Activated T-helper 2 cell treated with anti-CD3 and anti-CD28 coated beads, Interferon-gamma antibody, Interleukin-2, Interleukin-4, amounts not matched to agents 10 μg/mL and 5 μg/mL and 100 μg/mL, durations not matched to agents 14 hours and 24 hours and 36 hours (primary cell): ENCODE measurements at regions of chr11 and their contacts with region 1.

Region 1: DNA sequence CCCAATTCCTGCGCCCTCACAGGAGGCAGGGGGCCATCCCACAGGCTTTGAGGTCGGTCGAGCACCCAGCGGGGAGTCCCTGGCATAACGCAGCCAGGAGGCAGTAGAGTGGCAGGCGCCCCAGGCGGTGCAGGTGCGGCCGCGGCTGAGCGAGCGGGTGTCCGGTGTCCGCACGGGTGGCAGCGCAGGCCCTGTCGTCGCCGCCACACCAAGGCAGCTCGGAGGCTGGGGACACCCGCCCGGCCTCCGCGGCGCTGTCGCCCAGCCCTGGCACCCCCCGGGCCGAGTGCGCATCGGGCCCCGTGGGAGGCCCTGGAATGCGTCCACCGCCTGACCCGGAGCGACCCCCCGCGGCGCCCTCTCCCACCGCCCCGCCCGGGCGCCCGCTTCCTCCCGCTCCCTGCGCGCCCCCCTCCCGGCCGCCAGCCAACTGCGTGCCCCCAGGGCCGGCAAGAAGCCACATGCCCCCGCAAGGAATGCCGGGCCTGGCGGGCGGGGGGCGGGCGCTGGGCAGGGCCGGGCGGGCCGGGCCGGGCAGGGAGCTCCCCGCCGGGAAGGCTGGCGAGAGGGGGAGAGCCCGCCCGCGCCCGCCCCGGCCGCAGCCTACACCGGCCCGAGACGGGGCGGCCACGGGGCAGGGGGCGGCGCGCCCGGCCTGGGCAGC is 33.9 kb downstream of the PRDM11 start:
- DNase-seq: no peak
- H3K4me3 Mint-ChIP-seq: peak overlapping the region; percentile 49
- H3K27ac Mint-ChIP-seq: no peak overlapping the region
- H3K4me1 Mint-ChIP-seq: no peaks in the 10 kb centered on the region
- H3K27me3 Mint-ChIP-seq: peaks cover 39% of the 10 kb centered on the region

Region 2: GRCh38 chr11:45057938-45058646 is 122.2 kb before region 1 on chr11:
- intact Hi-C with region 1: no loop called
- DNase-seq: no peak
- H3K4me3 Mint-ChIP-seq: no peak overlapping the region
- H3K27ac Mint-ChIP-seq: no peak overlapping the region
- H3K4me1 Mint-ChIP-seq: no peaks in the 10 kb centered on the region
- H3K27me3 Mint-ChIP-seq: no peaks in the 10 kb centered on the region

Region 3: DNA sequence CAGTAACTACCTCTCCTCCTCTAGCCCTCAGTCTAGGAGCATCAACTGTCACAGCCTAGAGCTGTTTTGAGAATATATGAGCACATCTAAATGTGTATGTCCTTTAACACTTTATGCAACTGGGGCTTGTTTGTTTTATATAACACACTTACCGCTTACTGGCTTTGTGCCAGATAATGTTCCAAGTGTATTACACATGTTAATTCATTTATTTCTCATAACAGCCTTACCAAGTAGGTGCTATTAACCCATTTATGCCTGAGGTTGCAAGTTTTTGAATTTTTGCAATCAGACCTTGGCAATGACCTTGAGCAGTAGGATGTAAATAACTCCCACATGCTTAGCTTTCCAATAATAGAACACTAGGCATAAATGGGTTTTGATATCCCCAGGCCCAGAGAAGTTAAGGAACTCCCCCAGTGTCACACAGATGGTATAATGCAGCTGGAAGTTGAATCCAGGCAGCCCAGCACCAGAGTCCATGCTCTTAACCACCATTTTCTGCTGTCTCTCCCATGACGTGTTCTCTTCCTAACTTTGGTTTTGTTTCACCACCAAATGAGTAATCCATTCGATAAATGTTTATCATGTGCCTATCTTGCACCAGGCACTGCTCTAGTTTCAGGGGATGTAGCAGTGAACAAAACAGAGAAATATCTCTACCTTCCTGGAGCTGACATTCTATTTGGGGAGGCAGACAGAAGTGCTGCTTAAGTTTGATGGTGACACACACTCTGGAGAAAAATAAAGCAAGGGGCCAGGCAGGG is 10.8 kb before region 1 on chr11:
- intact Hi-C with region 1: loop called (anchors 1 kb)
- DNase-seq: no peak
- H3K4me3 Mint-ChIP-seq: no peak overlapping the region
- H3K27ac Mint-ChIP-seq: no peak overlapping the region
- H3K4me1 Mint-ChIP-seq: peaks cover 9% of the 10 kb centered on the region
- H3K27me3 Mint-ChIP-seq: peaks cover 10% of the 10 kb centered on the region